Right ventricle myocardium inferior (tissue), 1 donor: ENCODE measurements at regions of chr7 and their contacts with region 1.

Region 1: GRCh38 chr7:104983578-104984539 is 30.1 kb upstream of the KMT2E start:
- DNase-seq: peak; percentile 96
- ATAC-seq: peak; percentile 94

Region 2: DNA sequence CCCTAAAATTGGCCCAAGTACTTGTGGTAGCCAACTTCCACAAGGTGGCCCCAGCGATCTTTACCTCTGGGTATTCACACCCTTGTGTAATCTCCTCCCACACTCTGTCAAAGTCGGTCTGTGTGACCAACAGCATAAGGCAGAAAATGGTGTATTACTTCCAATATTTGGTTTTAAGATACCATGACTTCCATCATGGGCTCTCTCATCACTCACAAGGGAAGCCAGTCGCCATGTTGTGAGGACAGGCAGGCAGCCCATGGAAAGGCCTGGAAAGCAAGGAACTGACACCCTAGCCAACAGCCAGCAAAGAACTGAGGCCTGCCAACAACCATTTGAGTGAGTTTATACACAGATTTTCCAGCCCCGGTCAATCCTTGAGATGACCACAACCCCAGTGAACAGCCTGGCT is 60.8 kb before region 1 on chr7:
- intact Hi-C with region 1: loop called (anchors 5 kb)
- DNase-seq: no peak
- ATAC-seq: peak; percentile 92

Region 3: DNA sequence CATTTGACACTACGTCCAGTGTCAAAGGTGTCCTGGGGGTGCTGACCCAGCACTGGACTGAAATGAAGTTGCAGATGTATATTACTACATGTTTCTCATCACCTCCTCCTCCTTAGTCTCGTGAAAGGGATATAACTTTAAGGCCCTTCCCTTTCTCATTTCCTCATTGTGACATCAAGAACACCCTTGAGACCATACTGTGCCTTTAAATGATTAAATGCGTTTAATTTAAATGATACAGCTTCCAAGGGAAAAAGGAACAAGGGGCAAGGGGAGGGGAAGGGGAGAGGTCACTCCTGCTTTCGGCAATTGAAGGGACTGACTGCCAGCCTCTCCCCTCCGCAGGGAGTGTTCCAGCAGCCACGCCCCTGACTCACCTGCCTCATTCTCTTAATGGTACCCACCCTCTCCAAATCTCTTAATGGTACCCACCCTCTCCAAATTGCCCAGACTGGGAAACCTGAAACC is 50.3 kb before region 1 on chr7:
- intact Hi-C with region 1: no loop called
- DNase-seq: no peak
- ATAC-seq: no peak

Region 4: GRCh38 chr7:104943502-104944343 is 40.1 kb before region 1 on chr7:
- intact Hi-C with region 1: loop called (anchors 2 kb)
- DNase-seq: no peak
- ATAC-seq: peak; percentile 5

Region 5: DNA sequence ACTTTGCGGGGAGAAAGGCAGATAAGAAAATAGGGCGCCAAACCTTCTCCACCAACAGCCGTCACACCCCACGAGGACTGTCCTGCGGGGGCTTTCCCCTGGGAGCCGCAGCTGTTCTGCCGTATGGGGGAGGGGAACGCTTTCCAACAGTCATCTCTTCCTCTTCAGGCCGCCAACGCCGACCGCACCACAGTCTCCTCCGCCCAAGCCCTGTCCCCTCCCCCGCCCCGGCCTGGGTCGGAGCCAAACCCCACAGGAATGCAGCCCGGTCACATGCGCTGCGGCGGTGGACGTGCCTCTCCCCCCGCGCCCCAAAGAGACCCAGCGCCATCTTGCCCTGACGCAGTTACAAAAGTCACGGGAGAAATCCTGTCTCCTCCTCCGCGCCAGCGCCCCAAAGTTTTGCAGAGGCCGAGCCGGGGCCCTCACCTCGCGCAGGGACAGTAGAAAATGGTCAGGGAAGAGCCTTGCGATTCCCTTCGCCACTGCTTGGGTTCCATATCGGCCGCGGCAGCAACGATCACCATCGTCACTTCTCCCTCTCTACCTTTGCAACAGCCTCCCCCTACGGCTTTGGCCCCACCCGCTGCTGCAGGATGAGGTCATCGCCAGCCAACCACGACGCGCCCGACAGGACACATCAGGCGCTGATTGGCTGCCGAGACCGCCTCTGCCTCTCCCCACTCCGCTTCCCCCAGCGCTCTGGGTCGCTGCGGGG is 28.8 kb after region 1 on chr7:
- intact Hi-C with region 1: loop called (anchors 1 kb)
- DNase-seq: peak; percentile 100
- ATAC-seq: peak; percentile 92

Region 6: DNA sequence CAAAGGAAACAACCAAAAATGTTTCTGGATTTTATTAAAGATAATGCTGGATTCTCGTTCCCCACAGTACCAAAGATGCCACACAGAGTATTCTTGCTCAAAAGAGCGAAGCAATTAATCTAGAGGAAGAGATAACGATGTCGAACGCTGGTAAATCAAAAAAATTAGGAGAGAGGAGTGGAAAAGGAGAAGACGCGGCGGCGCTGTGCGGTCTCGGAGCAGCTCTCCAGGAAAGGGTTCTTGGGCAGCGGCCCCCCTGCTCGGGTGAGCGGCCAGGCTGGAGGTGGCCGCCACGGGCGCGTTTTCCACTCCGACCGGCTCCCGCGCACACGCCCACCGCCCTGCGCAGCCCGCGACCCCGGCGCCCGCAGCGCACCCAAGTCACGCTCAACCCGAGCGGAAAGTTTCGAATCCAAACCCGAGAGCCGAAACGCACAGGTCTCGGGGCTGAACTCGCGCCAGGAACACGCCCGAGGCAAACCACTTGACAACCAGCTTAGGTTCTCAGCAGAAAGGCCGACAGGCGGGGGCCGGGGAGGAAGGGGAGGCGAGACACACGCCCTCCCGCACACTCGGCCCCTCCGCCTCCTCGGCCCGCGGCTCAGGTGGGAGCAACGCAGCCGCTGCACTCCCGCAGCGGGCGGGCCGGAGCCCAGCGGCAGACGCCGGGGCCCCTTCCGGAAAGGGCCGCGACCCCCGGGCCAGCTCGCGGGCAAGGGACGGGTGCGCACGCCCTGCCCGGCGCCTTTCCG is 403.9 kb after region 1 on chr7:
- intact Hi-C with region 1: loop called (anchors 1 kb)
- DNase-seq: peak; percentile 86
- ATAC-seq: peak; percentile 63

Region 7: DNA sequence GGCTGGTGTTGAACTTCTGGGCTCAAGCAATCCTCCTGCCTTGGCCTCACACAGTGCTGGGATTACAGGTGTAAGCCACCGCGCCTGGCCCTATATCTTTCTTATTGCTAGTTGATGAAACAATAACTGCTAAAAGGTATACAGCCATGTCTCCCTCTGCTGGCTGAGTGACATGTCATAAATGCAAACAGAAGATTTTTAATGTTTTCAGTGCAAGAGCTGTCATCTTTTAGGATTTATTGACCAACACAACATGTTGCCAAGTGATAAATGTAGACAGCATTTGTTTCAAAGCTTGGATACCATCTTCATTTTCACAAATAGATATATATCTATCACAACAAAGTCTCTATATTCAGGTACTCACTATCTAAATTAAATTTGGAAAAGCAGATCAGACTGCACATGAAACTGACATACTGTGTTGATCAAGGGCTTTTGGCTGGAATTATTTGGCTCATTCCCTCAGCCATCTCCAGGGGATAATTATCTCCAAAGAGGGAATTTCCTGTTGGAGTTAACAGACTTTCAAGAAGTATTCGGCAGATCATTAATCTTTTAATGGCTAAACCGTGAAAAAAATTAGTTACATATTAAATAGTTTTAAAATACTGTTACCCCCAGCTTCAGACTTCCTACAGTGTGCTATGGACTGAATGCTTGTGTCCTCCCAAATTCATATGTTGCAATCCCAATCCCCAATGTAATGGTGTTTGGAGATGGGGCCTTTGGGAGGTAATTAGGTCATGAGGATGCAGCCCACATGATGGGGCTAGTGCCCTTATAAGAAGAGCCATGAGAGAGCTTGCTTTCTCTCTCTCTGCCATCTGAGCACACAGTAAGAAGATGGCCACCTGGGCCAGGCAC is 446.1 kb after region 1 on chr7:
- intact Hi-C with region 1: loop called (anchors 5 kb)
- DNase-seq: no peak
- ATAC-seq: peak; percentile 26